Ascending aorta (tissue), 2 donors: ENCODE measurements at regions of chr19 and their contacts with region 1.

Region 1: DNA sequence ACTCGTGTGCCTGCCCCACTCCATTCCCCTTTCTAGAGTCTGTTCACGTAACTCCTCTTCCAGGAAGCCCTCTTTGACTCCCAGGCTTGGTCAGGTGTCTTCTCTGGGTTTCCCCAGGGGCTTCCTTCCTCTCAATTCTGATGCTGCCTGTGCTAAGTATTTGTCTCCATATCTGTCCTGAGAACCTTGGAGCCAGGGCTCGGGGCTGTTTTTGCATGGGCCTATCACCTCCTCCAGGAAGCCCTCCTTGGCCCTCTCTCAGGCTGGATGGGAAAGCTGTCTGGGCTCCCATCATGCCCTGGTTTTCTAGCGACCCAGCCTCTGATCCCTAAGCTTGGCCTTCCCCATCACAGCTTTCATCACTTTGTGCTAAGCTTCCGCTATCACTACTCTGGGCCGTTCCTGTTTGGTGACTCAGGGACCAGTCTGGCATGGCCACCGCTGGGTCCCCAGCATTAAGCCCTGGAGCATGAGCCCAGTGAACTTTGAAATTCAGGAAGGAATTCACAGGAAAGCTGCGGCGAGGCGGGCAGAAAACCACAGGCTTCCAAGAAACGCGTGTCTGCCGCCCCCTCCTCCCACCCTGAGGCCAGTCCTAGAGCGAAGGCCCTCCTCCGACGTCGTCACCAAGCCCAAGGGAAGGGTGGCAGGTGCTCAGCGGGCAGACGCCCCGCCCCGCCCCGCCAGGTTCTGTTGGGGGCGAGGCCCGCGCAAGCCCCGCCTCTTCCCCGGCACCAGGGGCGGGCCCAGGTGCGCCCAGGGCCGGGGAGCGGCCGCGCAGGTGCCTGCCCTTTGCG is 486 bp upstream of the SPINT2 start:
- DNase-seq: peak; percentile 42 to 89
- H3K4me3 ChIP-seq: peak overlapping the region; percentile 65 to 76
- H3K27ac ChIP-seq: peak overlapping the region; percentile 98
- H3K4me1 ChIP-seq: peaks cover 7 to 33% of the 10 kb centered on the region in 2 donors
- H3K27me3 ChIP-seq: no peaks in the 10 kb centered on the region
- CTCF ChIP-seq: no peak

Region 2: DNA sequence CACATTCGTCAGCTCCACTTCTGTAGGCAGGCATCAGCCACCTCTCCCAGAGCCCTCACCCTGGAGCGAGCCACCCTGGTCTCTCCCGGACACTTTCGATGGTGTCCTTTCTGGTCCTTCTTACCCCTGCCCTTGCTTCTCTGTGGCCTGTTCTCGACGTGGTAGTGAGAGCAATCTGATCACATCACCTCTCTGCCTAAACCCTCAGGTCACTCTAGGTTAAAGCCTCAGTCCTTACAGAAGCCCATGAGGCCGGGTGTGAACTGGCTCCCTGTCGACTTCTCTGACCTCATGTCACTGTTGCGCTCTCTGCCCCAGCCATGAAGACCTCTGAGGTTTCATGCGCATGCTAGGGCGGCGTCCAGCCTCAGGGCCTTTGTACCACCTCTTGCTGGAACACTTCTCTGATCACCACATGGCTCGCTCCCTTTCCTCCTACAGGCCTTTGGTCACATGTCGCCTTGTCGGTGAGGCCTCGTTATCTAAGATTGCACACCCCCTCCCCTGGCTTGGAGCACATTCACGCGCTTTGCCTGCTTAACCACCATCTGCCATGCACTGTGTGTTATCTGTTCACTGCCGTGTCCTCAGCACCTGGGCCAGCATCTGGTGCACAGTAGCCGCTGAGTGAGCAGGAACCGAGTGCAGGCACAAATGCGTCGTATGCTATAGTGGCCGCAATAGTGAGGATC is 141.3 kb before region 1 on chr19:
- intact Hi-C with region 1: no loop called
- DNase-seq: no peak
- H3K4me3 ChIP-seq: no peak overlapping the region
- H3K27ac ChIP-seq: no peak overlapping the region
- H3K4me1 ChIP-seq: no peaks in the 10 kb centered on the region
- H3K27me3 ChIP-seq: no peaks in the 10 kb centered on the region
- CTCF ChIP-seq: no peak

Region 3: GRCh38 chr19:38194056-38194701 is 69.7 kb before region 1 on chr19:
- intact Hi-C with region 1: no loop called
- DNase-seq: no peak
- H3K4me3 ChIP-seq: no peak overlapping the region
- H3K27ac ChIP-seq: no peak overlapping the region
- H3K4me1 ChIP-seq: no peaks in the 10 kb centered on the region
- H3K27me3 ChIP-seq: no peaks in the 10 kb centered on the region
- CTCF ChIP-seq: no peak

Region 4: DNA sequence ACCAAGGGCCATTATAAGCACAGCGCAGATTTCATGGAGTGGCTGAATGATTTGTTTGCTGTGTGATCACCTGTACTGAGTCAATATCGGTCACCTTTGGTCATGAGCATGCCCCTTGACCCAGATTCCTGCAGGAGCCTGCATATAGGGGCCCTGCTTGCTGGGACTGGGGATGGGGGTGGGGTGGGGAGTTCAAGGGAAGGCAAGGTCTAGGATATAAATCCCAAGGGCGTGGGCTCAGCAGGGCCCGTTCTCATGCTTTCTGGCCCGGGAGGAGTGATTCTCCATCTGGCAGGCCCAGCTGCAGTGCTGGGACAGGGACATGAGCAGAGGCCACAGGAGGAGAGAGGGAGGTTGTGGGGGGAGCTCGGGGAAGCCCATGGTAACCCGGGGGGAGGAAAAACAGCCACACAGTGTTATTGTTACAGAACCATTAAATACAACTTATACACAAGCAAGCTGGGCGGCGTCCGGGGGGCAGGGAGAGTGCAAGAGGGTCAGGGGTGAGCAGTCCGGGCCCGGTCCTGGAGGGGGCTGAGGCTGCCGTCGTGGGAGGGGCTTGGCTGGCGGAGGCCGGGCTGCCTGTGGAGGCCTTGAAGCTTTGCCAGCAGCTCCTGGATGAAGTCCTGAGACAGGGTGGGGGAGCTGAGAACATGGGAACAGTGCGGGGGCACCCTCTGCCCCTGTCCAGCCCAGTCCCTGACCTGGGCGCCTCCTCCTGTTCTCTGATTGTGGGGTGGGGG is 12.9 kb before region 1 on chr19:
- intact Hi-C with region 1: loop called (anchors 1 kb)
- DNase-seq: peak; percentile 43 to 91
- H3K4me3 ChIP-seq: peak overlapping the region; percentile 89 to 90
- H3K27ac ChIP-seq: peak overlapping the region; percentile 90 to 99
- H3K4me1 ChIP-seq: peaks cover 29 to 63% of the 10 kb centered on the region in 2 donors
- H3K27me3 ChIP-seq: no peaks in the 10 kb centered on the region
- CTCF ChIP-seq: no peak